GM10248 (cell line): ENCODE measurements at regions of chr11 and their contacts with region 1.

Region 1: DNA sequence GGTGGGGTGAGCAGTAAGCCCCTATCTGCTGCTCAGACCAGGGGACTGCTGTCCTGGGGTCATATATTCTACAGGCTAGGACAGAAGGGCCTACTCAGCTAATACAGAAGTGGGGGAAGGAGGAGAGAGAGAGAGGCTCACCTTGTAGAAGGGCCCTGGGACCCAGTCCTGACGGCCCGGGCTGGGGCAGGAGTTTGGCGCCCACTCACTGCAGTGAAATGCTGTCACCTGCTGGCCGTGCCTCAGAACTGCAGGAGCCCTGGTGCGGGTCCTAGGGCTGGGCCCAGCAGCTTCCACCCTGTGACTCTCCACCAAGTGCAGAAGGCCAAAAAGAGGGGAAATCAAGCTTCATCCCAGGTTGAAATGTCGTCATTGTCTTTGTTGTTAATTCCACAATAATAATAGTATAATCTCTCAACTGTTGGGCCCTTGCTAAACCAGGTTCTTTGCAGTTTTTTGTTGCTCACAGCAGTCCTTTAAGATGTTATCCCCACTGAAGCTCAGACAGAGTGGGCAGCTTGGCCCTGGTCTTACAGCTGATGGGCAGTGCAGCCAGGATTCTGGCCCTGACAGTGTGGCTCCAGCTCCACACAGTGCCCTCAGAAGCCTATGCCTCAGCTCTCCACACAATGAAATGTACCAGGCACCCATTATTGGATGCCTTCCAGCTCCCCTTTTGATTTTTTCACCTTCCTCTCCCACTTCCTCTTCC is 29.6 kb downstream of the TRIM29 start:
- DNase-seq: peak; percentile 90
- CTCF ChIP-seq: peak; percentile 99

Region 2: GRCh38 chr11:119481021-119481666 is 627.2 kb before region 1 on chr11:
- CTCF ChIA-PET with region 1: interaction called, 17 read pairs
- POLR2A ChIA-PET with region 1: no interaction called
- DNase-seq: peak; percentile 88
- CTCF ChIP-seq: peak; percentile 94

Region 3: DNA sequence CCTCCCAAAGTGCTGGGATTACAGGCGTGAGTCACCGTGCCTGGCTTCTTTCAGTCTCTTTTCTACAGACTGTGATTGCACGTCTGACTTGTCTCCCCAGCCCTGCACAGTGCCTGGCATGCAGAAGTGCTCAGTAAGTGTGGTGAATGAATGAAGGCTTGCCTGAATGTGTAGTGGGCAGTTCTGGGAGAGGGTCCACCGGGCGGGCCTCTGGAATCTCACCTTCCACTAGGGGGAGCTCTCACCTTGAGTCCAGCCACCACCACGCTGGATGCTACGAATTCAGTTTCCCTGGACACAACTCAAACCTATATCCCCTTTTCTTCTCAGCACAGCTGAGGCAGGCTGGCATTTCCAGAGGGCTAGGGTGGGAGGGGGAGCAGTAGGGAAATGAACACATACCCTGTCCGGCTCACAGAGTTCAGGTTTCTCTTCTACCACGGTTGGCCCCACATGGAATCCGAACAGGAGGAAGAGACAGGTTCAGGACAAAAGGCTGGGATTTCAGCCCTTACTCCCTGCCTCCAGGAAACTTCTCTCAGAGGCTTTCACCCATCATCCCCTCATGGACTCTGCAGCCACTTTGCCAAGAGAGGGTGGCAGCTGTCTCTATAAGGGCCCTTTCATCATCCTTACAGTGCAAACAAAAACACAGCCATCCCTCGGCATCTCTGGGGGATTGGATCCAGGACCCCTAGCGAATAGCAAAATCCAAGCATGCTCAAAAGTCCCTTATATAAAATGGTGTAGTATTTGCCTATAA is 466.1 kb before region 1 on chr11:
- CTCF ChIA-PET with region 1: interaction called, 44 read pairs
- POLR2A ChIA-PET with region 1: no interaction called
- DNase-seq: peak; percentile 63
- CTCF ChIP-seq: peak; percentile 43

Region 4: GRCh38 chr11:119666463-119667131 is 441.7 kb before region 1 on chr11:
- CTCF ChIA-PET with region 1: interaction called, 60 read pairs
- POLR2A ChIA-PET with region 1: no interaction called
- DNase-seq: peak; percentile 86
- CTCF ChIP-seq: peak; percentile 89

Region 5: GRCh38 chr11:119673759-119674336 is 434.5 kb before region 1 on chr11:
- CTCF ChIA-PET with region 1: interaction called, 60 read pairs
- POLR2A ChIA-PET with region 1: no interaction called
- DNase-seq: peak; percentile 87
- CTCF ChIP-seq: peak; percentile 77

Region 6: GRCh38 chr11:120096369-120097191 is 11.7 kb before region 1 on chr11:
- CTCF ChIA-PET with region 1: interaction called, 10 read pairs
- POLR2A ChIA-PET with region 1: no interaction called
- DNase-seq: no peak
- CTCF ChIP-seq: no peak

Region 7: GRCh38 chr11:120121871-120122473 is 13.7 kb after region 1 on chr11:
- CTCF ChIA-PET with region 1: interaction called, 40 read pairs
- POLR2A ChIA-PET with region 1: no interaction called
- DNase-seq: no peak
- CTCF ChIP-seq: no peak